Left lung (tissue), 14 donors: ENCODE measurements at regions of chr1 and their contacts with region 1.

Region 1: DNA sequence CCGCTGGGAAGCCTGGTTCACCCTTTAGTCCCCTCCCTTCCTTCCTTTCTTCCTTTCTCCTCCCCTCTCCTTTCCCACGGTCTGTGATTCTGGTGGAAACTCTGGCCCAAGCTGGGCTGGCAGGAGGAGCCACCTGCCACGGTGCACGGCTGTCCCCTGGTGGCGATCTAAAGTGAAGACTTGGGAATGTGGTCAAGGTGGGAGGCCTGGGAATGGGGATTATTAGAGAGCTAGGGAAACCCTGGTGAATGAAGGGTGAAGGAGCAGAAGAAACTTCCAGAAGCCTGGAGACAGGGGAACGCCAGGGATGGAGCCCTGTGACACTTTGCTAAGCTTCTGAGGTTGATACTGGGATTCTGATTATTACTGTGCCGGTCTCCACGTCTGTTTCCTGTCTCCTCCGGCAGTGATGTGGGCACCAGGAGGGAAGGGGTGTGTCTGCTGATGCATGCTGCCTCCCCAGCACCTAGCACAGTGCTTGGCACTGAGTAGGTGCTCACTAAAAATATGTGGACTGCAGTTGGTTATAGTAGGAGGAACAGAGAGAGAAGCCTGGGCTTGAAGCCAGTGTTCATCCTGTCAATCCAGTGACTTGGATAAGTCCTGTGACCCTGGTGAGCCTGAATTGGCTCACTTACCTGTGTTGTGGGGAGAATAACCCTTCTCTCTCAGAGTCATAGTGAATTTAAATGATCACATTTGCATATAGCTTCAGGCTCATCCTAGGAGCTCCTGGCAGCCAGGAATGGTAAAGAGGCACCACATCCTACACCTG is 71.2 kb upstream of the NBPF3 start:
- DNase-seq: peak; percentile 51 to 92 (median 80)
- ATAC-seq: peak; percentile 97
- H3K4me3 ChIP-seq: no peak overlapping the region
- H3K27ac ChIP-seq: no peak overlapping the region
- H3K4me1 ChIP-seq: peaks cover 0 to 9% of the 10 kb centered on the region in 2 donors
- H3K27me3 ChIP-seq: no peaks in the 10 kb centered on the region
- CTCF ChIP-seq: peak; percentile 87 to 96

Region 2: GRCh38 chr1:21232044-21232443 is 136.7 kb before region 1 on chr1:
- intact Hi-C with region 1: loop called in 1 of 2 experiments (anchors 5 kb)
- DNase-seq: peak in 2 of 4 donors; percentile 59 to 78
- ATAC-seq: peak; percentile 93
- H3K4me3 ChIP-seq: no peak overlapping the region
- H3K27ac ChIP-seq: no peak overlapping the region
- H3K4me1 ChIP-seq: no peaks in the 10 kb centered on the region
- H3K27me3 ChIP-seq: no peaks in the 10 kb centered on the region
- CTCF ChIP-seq: peak; percentile 70 to 75

Region 3: DNA sequence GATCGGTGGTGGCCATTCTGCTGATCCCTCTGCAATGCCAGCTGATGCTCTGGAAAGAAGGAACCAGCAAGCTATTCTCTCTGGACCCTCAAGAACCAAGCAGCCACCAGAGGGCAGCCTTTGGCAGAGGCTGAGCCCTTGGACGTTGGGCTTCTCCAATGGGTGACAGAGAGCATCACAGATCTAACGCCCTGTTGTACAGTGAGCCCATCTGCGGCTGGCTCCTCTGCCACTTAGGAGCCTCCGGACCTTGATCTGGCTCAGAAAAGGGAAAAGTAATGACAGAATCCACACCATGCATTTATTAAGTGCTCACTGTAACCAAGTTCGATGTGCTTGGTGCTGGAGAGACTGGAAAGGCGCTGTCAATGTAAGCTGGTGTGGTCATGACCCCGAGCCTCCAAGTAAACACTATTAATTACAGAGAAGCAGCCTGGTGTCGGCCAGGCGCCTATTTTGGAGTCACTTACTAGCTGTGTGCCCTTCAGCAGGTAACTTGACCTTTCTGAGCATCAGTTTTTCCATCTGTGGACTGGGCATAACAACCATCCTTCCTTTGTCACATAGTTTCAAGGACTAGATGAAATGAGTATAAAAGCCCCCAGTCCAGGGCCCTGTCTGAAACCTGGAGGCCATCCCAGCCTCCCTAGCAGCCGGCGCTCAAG is 113.3 kb before region 1 on chr1:
- intact Hi-C with region 1: loop called (anchors 5 to 10 kb)
- DNase-seq: peak; percentile 70 to 92 (median 86)
- ATAC-seq: peak; percentile 86
- H3K4me3 ChIP-seq: no peak overlapping the region
- H3K27ac ChIP-seq: no peak overlapping the region
- H3K4me1 ChIP-seq: peaks cover 0 to 38% of the 10 kb centered on the region in 2 donors
- H3K27me3 ChIP-seq: no peaks in the 10 kb centered on the region
- CTCF ChIP-seq: peak; percentile 81 to 84

Region 4: GRCh38 chr1:21261551-21262281 is 107.0 kb before region 1 on chr1:
- intact Hi-C with region 1: loop called (anchors 5 to 10 kb)
- DNase-seq: peak in 2 of 4 donors; percentile 58 to 71
- ATAC-seq: peak; percentile 76
- H3K4me3 ChIP-seq: peak overlapping the region in 1 of 2 donors; percentile 8
- H3K27ac ChIP-seq: peak overlapping the region; percentile 75 to 79
- H3K4me1 ChIP-seq: peaks cover 24 to 58% of the 10 kb centered on the region in 2 donors
- H3K27me3 ChIP-seq: no peaks in the 10 kb centered on the region
- CTCF ChIP-seq: no peak

Region 5: GRCh38 chr1:21451212-21451812 is 82.6 kb after region 1 on chr1:
- intact Hi-C with region 1: no loop called
- DNase-seq: no peak
- ATAC-seq: no peak
- H3K4me3 ChIP-seq: no peak overlapping the region
- H3K27ac ChIP-seq: no peak overlapping the region
- H3K4me1 ChIP-seq: peaks cover 0 to 11% of the 10 kb centered on the region in 2 donors
- H3K27me3 ChIP-seq: no peaks in the 10 kb centered on the region
- CTCF ChIP-seq: no peak

Region 6: DNA sequence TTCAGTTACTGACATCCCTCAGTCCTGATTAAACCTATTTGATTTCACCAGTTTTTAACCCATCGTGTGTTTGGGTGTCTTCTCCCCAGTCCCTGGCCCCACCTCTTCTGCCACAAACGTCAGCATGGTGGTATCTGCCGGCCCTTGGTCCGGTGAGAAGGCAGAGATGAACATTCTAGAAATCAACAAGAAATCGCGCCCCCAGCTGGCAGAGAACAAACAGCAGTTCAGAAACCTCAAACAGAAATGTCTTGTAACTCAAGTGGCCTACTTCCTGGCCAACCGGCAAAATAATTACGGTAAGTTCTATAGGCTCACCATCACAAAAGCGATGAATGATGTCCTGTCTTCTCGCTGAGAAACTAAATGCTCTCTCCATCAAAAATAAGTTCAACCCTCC is 99.9 kb after region 1 on chr1:
- intact Hi-C with region 1: no loop called
- DNase-seq: no peak
- ATAC-seq: no peak
- H3K4me3 ChIP-seq: no peak overlapping the region
- H3K27ac ChIP-seq: no peak overlapping the region
- H3K4me1 ChIP-seq: no peaks in the 10 kb centered on the region
- H3K27me3 ChIP-seq: no peaks in the 10 kb centered on the region
- CTCF ChIP-seq: no peak

Region 7: DNA sequence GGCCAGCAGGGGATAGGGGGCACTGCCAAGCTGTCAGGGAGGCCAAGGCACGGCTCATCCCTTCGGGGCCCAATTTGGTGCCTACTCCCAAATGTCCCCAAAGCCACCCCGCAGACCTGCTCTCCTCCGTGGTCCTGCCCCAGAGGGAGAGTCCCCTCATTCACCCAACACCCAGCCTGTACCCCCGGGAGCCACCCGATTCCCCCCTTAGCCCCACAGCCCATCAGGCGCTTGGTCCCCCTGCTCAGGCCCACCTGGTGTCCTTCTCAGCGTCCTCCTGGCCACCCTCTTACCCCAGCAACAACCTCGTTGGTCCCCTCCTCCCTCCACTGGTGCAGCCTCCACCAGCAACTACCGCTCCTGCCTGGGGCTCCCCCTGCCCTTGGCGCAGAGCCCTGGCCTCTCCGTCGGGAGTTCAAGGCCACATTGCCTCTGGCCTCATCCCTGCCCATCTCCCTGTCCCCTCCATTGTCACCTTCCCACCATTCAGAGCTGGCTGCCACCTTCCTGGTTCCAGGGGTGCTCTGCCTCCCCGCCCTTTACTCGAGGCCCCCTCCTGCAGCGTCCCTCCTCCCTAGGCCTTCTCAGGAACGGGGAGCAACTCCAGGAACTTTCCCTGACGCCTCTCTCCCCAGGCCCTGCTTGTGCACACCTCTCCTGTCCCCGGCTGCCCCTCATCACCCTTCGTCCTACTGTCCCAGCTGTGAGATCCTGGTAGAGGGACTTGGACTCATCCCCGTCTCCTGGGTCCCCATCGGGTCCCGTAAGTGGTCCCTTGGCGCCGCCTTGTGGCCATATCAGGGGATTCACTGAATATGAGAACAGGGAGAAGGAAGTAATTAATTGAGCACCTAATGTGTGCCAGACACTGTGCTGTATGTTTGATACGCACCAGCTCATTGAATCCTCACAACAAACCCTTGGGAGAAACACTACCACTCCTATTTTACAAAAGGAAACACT is 226.5 kb after region 1 on chr1:
- intact Hi-C with region 1: no loop called
- DNase-seq: peak in 2 of 4 donors; percentile 67 to 94
- ATAC-seq: peak; percentile 48
- H3K4me3 ChIP-seq: no peak overlapping the region
- H3K27ac ChIP-seq: no peak overlapping the region
- H3K4me1 ChIP-seq: peaks cover 0 to 9% of the 10 kb centered on the region in 2 donors
- H3K27me3 ChIP-seq: peaks cover 0 to 48% of the 10 kb centered on the region in 2 donors
- CTCF ChIP-seq: peak; percentile 49 to 77

Region 8: DNA sequence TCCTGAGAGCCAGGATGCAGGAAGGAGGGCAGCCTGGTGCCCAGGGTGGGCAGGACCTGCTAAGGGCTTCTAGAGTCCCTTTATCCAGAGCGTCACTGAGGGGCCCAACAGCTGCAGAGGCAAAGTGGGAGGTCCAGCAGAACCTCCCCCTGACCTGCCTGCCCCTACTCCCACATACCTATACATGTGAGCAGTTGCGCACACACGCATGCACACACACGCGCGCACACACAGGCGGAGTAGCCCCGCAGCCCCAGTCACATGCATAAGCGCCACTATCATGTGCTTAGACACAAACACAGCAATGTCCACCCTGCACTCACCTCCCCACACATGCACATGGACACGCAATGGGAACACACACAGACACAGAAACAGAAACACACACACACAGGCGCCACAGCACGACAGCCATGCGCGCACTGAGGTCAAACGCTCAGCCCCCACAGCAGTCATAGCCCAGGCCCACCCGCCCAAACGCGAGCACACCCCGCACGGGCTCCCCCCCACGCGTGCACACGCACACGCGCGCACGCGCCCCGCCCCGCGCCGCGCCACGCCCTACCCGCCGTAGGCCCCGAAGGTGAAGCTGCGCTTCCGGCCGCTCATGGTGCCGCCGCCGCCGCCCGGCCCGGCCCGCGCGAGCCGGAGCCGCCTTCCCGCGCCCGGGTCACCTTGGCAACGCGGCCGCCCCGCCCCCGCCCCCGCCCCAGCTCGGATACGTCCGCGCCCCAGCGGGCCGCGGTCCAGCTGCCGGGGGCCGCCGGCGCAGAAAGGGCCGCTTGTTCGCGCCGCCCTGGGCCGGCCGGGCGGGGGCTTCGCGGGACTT is 282.7 kb after region 1 on chr1:
- intact Hi-C with region 1: no loop called
- DNase-seq: peak in 2 of 4 donors; percentile 60 to 65
- ATAC-seq: peak; percentile 56
- H3K4me3 ChIP-seq: peak overlapping the region in 1 of 2 donors; percentile 39
- H3K27ac ChIP-seq: no peak overlapping the region
- H3K4me1 ChIP-seq: peaks cover 0 to 12% of the 10 kb centered on the region in 2 donors
- H3K27me3 ChIP-seq: peaks cover 4 to 71% of the 10 kb centered on the region in 2 donors
- CTCF ChIP-seq: no peak